Activated CD4-positive, alpha-beta memory T cell treated with anti-CD3 and anti-CD28 coated beads, Interleukin-2, amount 10 ng/mL, durations not matched to agents 7 days and 5 days (primary cell): ENCODE measurements at regions of chr2 and their contacts with region 1.

Region 1: GRCh38 chr2:121699421-121700333 is 37.0 kb downstream of the NIFK start:
- DNase-seq: peak; percentile 95
- H3K4me3 Mint-ChIP-seq: peak overlapping the region; percentile 79
- H3K27ac Mint-ChIP-seq: peak overlapping the region; percentile 97
- H3K4me1 Mint-ChIP-seq: peaks cover 50% of the 10 kb centered on the region
- H3K27me3 Mint-ChIP-seq: no peaks in the 10 kb centered on the region

Region 2: DNA sequence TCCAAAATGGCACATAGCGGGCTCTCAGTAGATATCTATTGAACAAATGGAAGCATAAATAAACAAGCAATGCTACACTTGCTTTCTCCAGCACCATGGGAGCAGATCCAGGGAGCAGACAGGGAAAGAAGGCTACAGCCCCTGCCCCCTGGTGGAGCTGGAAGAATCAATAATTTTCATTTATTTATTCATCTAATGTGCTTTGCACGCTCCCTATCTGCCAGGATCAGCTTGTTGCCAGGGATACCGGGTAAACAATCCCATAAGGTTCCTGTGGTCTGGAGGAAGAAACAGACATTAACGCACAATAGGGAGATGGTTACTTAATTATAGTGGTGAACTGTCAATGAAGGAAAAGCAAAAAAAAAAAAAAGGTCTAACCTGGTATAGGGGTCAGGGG is 10.3 kb before region 1 on chr2:
- CTCF ChIA-PET with region 1: interaction called, 10 read pairs
- POLR2A ChIA-PET with region 1: interaction called, 10 read pairs
- DNase-seq: no peak
- H3K4me3 Mint-ChIP-seq: no peak overlapping the region
- H3K27ac Mint-ChIP-seq: no peak overlapping the region
- H3K4me1 Mint-ChIP-seq: peaks cover 7% of the 10 kb centered on the region
- H3K27me3 Mint-ChIP-seq: no peaks in the 10 kb centered on the region

Region 3: DNA sequence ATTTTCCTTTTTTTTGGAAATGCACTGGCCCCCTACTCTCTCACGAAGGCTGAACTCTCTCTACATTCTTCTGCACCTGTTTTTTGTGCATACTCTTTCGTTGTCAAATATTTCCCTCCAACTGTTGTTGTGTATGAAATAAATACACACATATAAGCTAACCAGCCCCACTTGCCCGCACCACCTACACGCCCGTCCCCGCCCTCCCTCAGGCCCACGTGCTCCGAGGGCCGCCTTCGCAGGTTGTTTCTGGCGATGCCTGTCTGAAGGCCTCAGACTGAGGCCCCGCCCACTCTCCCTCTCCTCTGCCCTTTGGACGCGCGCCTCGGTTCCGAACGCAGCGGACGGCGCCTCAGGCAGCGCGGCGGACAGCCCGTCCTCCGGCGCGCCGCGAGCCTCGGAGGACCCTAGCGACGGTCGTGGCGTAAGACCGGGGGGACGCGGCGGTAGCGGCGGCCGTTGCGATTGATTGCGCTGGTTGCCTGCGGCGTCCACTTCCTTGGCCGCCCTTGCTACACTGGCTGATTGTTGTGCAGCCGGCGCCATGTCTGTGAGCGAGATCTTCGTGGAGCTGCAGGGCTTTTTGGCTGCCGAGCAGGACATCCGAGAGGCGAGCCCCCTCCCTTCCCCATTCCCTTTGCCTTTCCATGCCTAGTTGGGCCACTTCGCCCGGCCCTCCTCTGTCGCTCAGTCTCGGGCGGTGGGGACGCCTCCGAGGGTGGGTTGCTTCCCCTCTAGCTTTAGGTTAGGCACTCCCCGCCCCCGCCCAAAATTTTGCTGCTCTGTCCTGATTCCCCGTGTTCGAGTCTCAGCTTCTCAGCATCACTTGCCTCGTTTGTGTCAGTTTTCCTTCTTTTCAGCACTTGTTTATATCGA is 55.8 kb after region 1 on chr2 and contains the start of gene TSN:
- CTCF ChIA-PET with region 1: no interaction called
- POLR2A ChIA-PET with region 1: interaction called, 16 read pairs
- DNase-seq: peak; percentile 98
- H3K4me3 Mint-ChIP-seq: peak within 1 kb of the TSS; percentile 86
- H3K27ac Mint-ChIP-seq: peak within 1 kb of the TSS; percentile 88
- H3K4me1 Mint-ChIP-seq: peaks cover 26% of the 10 kb centered on the region
- H3K27me3 Mint-ChIP-seq: no peaks in the 10 kb centered on the region
- total RNA-seq, gene TSN: 52.7 to 56.7 TPM